ENCODE measurements at regions of chr17 and their contacts with region 1.

Region 1: GRCh38 chr17:75412455-75413317 is 7.2 kb upstream of the GRB2 start:
- DNase-seq: peak; percentile 75 to 86
- ATAC-seq: peak; percentile 87 to 89
- H3K4me3 ChIP-seq: peak overlapping the region; percentile 7; the same call in 2 of the 3 replicates
- H3K27ac ChIP-seq: peak overlapping the region in 1 of 2 experiments; percentile 35; a peak in 1 of 6 replicates
- H3K4me1 ChIP-seq: no peaks in the 10 kb centered on the region
- CTCF ChIP-seq: peak; percentile 95
- EP300 ChIP-seq: no peak
- POLR2A ChIP-seq: no peak
- RAD21 ChIP-seq: peak; percentile 91 to 95

Region 2: DNA sequence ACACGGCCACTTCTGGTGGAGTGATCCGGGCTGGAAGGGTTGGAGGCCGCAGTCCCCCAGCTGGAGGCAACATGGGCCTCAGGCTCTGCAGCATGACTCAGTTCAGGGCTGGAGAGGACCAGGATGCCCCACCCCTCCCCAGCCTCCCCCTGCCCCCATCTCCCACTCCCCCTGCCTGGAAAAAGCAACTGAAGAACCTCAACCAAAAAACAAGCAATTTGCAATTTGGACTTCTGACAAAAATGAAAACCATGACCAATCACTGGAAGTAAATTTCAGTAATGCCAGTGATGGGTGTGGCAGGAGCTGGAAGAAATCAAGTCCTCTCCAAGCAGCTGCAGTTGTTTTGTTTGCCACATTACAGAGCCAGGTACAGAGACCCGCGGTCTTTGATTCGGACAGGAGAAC is 135.0 kb before region 1 on chr17:
- CTCF ChIA-PET with region 1: interaction called, 19 read pairs
- POLR2A ChIA-PET with region 1: no interaction called
- DNase-seq: no peak
- ATAC-seq: 0 out of 6 replicates have a peak, but pooled peaks of 1 of the 2 experiments have one; percentile 17
- H3K4me3 ChIP-seq: no peak overlapping the region
- H3K27ac ChIP-seq: 0 out of 6 replicates have a peak overlapping the region, but pooled peaks of 1 of the 2 experiments have one; percentile 2
- H3K4me1 ChIP-seq: peaks cover 15% of the 10 kb centered on the region
- CTCF ChIP-seq: no peak
- EP300 ChIP-seq: no peak
- POLR2A ChIP-seq: no peak
- RAD21 ChIP-seq: no peak

Region 3: GRCh38 chr17:75295201-75296158 is 117.2 kb before region 1 on chr17:
- CTCF ChIA-PET with region 1: interaction called, 11 read pairs
- POLR2A ChIA-PET with region 1: no interaction called
- DNase-seq: no peak
- ATAC-seq: no peak
- H3K4me3 ChIP-seq: no peak overlapping the region
- H3K27ac ChIP-seq: no peak overlapping the region
- H3K4me1 ChIP-seq: peaks cover 1% of the 10 kb centered on the region; the same call in 1 of the 3 replicates
- CTCF ChIP-seq: no peak
- EP300 ChIP-seq: no peak
- POLR2A ChIP-seq: no peak
- RAD21 ChIP-seq: no peak

Region 4: DNA sequence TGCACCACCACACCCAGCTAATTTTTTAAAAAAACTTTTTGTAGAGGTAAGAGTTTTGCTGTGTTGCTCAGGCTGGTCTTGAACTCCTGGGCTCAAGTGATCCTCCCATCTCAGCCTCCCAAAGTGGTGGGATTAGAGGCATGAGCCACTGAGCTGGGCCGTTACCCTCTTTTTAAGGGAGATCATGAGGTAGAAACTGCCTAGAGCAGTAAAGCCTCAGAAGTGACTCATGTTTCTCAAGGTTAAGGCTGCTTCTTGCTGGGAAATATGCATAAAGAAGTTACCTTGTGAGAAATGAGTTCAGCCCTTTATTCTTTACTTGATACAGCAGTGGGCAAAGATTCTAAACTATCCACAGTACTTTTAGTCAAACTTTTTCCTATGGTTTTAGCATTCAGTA is 45.4 kb before region 1 on chr17:
- CTCF ChIA-PET with region 1: interaction called, 10 read pairs
- POLR2A ChIA-PET with region 1: no interaction called
- DNase-seq: peak; percentile 30 to 40
- ATAC-seq: peak; percentile 38 to 57; a peak in 2 of 6 replicates
- H3K4me3 ChIP-seq: no peak overlapping the region
- H3K27ac ChIP-seq: 0 out of 6 replicates have a peak overlapping the region, but pooled peaks of 1 of the 2 experiments have one; percentile 0
- H3K4me1 ChIP-seq: peaks cover 65% of the 10 kb centered on the region
- CTCF ChIP-seq: no peak
- EP300 ChIP-seq: no peak
- POLR2A ChIP-seq: no peak
- RAD21 ChIP-seq: no peak

Region 5: GRCh38 chr17:75430159-75430974 is 17.7 kb after region 1 on chr17:
- CTCF ChIA-PET with region 1: interaction called, 36 read pairs
- POLR2A ChIA-PET with region 1: no interaction called
- DNase-seq: peak; percentile 90 to 91
- ATAC-seq: peak; percentile 66 to 84; a peak in 5 of 6 replicates
- H3K4me3 ChIP-seq: peak overlapping the region; percentile 17; the same call in 2 of the 3 replicates
- H3K27ac ChIP-seq: peak overlapping the region; percentile 80 to 89
- H3K4me1 ChIP-seq: peaks cover 35% of the 10 kb centered on the region
- CTCF ChIP-seq: no peak
- EP300 ChIP-seq: no peak
- POLR2A ChIP-seq: 0 out of 2 replicates have a peak, but pooled peaks have one; percentile 15
- RAD21 ChIP-seq: no peak

Region 6: GRCh38 chr17:75864448-75864871 is 451.8 kb after region 1 on chr17:
- CTCF ChIA-PET with region 1: no interaction called
- POLR2A ChIA-PET with region 1: no interaction called
- DNase-seq: no peak
- ATAC-seq: peak; percentile 23 to 28; a peak in 3 of 6 replicates
- H3K4me3 ChIP-seq: no peak overlapping the region
- H3K27ac ChIP-seq: no peak overlapping the region
- H3K4me1 ChIP-seq: peaks cover 10% of the 10 kb centered on the region
- CTCF ChIP-seq: no peak
- EP300 ChIP-seq: no peak
- POLR2A ChIP-seq: no peak
- RAD21 ChIP-seq: no peak

Region 7: DNA sequence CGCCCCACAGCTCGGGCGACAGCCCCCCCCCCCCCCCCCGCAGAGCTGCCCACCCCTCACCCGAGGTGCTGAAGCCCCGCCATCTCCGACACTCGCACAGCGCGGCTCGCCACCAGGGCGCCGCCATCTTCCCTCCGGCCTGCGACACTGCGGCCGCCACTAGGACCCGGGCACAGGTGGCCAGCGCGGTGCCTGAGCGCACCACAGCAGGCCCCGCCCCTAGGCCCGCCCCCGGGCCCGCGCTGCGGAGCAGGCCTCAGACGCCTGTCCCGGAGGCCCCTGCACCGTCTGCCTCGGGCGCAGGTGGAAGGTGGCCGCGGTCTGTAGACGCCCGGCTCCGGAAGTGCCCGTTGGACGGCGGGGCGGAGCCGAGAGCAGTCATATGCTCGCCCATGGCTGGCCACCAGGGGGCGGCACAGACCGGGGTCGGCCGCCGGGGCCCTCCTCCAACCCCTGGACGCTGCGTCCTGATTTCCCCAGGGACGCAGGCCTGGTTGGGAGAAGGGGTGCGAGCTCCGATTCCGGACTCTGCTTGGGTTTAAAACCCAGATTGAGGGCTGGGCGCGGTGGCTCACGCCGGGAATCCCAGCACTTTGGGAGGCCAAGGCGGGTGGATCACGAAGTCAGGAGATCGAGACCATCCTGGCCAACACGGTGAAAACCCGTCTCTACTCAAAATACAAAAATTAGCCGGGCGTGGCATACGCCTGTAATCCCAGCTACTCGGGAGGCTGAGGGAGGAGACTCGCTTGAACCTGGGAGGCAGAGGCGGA is 492.2 kb after region 1 on chr17 and contains the start of gene MRPL38:
- CTCF ChIA-PET with region 1: no interaction called
- POLR2A ChIA-PET with region 1: no interaction called
- DNase-seq: peak; percentile 97 to 98
- ATAC-seq: peak; percentile 96 to 97
- H3K4me3 ChIP-seq: peak within 1 kb of the TSS; percentile 87
- H3K27ac ChIP-seq: peak within 1 kb of the TSS; percentile 86 to 93
- H3K4me1 ChIP-seq: peaks cover 22% of the 10 kb centered on the region
- CTCF ChIP-seq: peak; percentile 99
- EP300 ChIP-seq: no peak
- POLR2A ChIP-seq: peak; percentile 92
- RAD21 ChIP-seq: peak; percentile 90 to 98
- polyA plus RNA-seq, gene MRPL38: 43.4 and 53.5 TPM in 2 replicates

Measured in A549 (cell line).